Right ventricle myocardium inferior (tissue), 1 donor: ENCODE measurements at regions of chr6 and their contacts with region 1.

Region 1: DNA sequence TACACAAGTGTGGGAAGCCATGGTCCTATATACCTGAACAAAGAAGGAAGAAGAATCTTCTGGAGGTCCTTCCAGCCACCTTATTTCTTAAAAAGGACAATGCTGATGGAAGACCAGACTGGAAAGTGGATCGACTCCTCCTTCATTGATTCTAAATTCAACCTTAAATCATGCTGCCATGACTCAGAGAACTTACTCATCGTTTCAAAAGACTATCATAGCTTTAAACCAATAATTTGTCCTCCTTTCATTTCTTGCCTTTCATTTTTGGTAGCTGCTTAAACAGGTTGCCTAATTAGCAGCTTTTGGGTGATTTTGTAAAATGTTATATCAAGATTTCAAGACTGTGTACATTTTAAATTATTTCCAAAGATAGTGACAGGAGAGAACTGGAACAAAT is 60.8 kb downstream of the RTN4IP1 start:
- DNase-seq: no peak
- ATAC-seq: no peak

Region 2: DNA sequence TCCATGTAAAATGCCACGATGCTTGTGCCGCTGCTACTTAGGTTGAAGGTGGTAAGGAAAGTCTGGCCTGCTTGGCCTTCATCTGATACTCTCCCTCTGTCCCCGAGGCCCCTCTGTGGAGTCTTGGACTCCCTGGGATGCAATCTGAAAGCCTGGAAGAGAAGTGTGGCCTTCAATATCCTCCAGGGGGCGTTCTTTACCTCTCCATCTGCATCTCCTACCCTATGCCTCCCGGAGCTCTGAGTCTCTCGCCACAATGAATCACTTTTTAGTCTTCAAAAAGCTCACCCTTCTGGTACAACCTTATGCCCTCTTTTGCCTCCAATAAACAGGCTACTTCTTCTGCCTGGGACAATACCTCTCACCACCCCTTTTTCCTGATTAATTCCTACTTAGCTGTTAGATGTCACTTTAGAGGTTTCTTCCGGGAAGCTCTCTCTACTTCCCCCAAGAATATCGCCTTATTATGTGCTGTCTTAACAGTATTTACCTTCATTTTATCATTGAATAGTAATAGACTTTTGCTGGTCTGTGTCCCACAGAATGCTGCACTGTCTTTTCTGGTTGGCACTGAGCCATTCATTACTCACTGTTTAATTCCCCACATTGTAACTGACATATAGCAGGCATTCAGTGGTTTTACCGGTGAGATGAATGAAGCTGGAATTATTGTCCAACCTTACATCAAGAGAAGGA is 229.0 kb before region 1 on chr6:
- intact Hi-C with region 1: loop called (anchors 5 kb)
- DNase-seq: no peak
- ATAC-seq: peak; percentile 85

Region 3: DNA sequence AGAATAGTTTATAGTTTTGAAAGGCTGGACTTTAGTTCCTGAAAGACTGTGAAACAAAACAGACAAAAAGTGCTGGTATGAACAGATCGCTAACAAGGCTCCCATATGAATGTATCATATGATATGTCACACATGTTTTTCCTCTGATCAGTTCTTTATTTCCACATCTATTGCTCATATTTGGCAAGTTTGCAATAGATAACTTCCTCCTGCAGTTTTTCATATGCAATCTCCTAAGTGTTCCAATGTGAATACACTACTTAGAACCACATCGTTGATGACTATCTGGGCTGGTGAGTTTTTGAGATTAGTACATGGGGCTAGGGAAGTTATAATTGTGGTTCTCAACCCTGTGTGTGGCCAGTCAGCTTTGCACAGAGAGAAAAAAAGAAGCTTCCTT is 185.0 kb before region 1 on chr6:
- intact Hi-C with region 1: no loop called
- DNase-seq: no peak
- ATAC-seq: no peak

Region 4: GRCh38 chr6:107218142-107218541 is 649.6 kb after region 1 on chr6:
- intact Hi-C with region 1: no loop called
- DNase-seq: no peak
- ATAC-seq: no peak